Activated CD8-positive, alpha-beta T cell treated with anti-CD3 and anti-CD28 coated beads for 36 hours (primary cell): ENCODE measurements at regions of chr19 and their contacts with region 1.

Region 1: DNA sequence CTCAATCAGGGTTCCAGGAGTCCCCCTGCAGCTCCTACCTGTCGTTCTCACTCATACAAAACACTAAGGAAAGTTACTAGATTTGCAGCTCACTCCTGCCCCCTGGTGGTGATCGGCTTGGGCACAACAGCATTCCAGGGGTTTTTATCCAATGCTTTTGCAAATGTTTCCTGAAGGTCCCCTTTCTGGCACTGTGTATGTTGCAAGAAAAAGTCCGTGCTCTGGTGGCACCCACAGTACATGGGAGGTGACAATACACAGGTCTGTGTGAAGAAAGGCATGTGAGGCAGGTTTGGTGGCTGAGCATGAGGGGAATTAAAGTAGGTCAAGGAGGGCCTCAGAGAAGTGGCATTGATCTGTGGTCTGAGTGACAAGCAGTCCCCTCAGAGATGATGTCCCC is 8.6 kb upstream of the TYK2 start:
- DNase-seq: peak; percentile 89
- ATAC-seq: peak; percentile 48
- H3K4me3 Mint-ChIP-seq: no peak overlapping the region
- H3K27ac Mint-ChIP-seq: no peak overlapping the region
- H3K4me1 Mint-ChIP-seq: peaks cover 16% of the 10 kb centered on the region
- H3K27me3 Mint-ChIP-seq: no peaks in the 10 kb centered on the region
- CTCF ChIP-seq: peak; percentile 99

Region 2: DNA sequence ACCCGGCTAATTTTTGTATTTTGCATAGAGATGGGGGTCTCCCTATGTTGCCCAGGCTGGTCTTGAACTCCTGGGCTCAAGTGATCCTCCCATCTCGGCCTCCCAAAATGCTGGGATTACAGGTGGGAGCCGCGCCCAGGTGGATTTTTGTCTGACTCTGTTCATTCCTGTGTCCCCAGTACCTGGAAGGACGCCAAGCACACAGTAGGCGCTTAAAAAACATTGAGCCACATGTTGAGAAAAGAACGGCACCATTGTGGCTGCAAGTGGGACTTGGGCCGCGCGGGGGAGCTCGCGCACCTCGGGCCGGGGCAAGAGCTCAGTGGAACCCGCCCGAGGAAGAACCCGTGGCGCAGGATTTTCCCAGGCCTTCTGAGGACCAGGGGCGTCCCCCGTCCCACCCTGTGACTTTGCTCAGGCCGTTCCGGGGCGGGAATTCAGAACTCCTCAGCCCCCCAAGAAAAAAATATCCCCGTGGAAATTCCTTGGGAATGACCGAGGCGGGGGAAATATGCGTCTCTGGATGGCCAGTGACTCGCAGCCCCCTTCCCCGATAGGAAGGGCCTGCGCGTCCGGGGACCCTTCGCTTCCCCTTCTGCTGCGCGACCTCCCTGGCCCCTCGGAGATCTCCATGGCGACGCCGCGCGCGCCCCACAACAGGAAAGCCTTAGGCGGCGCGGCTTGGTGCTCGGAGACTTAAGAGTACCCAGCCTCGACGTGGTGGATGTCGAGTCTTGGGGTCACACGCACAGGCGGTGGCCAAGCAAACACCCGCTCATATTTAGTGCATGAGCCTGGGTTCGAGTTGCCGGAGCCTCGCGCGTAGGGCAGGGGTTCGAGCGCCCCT is 119.4 kb before region 1 on chr19:
- CTCF ChIA-PET with region 1: interaction called, 286 read pairs
- POLR2A ChIA-PET with region 1: interaction called, 23 read pairs
- intact Hi-C with region 1: loop called (anchors 1 kb)
- DNase-seq: peak; percentile 95
- ATAC-seq: peak; percentile 72
- H3K4me3 Mint-ChIP-seq: peak overlapping the region; percentile 85
- H3K27ac Mint-ChIP-seq: peak overlapping the region; percentile 89
- H3K4me1 Mint-ChIP-seq: peaks cover 20% of the 10 kb centered on the region
- H3K27me3 Mint-ChIP-seq: no peaks in the 10 kb centered on the region
- CTCF ChIP-seq: peak; percentile 97

Region 3: GRCh38 chr19:10292206-10292788 is 96.7 kb before region 1 on chr19:
- CTCF ChIA-PET with region 1: interaction called, 21 read pairs
- POLR2A ChIA-PET with region 1: interaction called, 8 read pairs
- intact Hi-C with region 1: no loop called
- DNase-seq: peak; percentile 87
- ATAC-seq: peak; percentile 59
- H3K4me3 Mint-ChIP-seq: peak overlapping the region; percentile 73
- H3K27ac Mint-ChIP-seq: no peak overlapping the region
- H3K4me1 Mint-ChIP-seq: peaks cover 62% of the 10 kb centered on the region
- H3K27me3 Mint-ChIP-seq: peaks cover 75% of the 10 kb centered on the region
- CTCF ChIP-seq: no peak

Region 4: GRCh38 chr19:10344780-10345179 is 44.2 kb before region 1 on chr19:
- CTCF ChIA-PET with region 1: interaction called, 14 read pairs
- POLR2A ChIA-PET with region 1: no interaction called
- intact Hi-C with region 1: loop called (anchors 10 kb)
- DNase-seq: no peak
- ATAC-seq: no peak
- H3K4me3 Mint-ChIP-seq: no peak overlapping the region
- H3K27ac Mint-ChIP-seq: no peak overlapping the region
- H3K4me1 Mint-ChIP-seq: peaks cover 9% of the 10 kb centered on the region
- H3K27me3 Mint-ChIP-seq: no peaks in the 10 kb centered on the region
- CTCF ChIP-seq: no peak

Region 5: DNA sequence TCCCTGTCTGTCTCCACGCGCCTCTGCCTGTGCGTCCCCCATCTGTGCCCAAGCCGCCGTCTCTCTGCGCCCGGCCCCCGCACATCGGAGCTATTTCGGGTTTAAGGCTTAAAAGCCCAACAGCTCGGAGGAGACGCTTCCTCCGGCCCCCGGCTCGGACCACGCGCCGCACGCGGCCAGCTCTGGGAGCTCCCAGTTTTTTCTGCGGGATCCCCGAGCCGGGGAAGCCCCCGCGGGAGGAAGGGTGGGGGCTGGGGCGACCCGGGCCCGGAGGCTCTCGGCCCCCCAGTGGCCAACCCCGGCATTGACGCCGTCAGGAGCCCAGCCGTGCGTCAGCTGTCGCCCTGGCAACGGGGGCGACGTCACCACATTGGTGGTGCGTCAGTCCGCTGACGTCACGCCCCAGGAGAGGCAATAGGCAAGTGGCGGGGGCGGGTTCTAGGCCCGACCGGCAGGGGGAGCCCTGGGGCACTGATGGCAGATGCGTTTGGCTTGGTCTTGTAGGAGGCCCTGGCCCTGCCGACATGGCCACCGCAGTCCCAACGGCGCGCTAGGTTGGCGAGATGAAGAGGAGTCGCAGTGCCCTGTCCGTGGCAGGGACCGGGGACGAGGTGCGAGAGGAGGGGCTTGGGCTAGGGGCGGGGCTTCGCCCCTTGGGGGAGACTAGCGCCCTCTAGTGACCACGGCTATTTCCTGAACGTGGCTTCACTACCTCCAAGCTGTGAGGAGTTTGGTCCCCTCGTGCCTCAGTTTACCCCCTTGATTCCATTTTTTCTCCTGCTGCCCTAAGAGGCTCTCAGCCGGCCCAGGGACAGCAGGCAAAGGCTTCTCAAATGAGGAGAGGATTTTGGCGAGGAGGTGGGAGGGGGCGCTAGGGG is 27.7 kb after region 1 on chr19:
- CTCF ChIA-PET with region 1: interaction called, 10 read pairs
- POLR2A ChIA-PET with region 1: no interaction called
- intact Hi-C with region 1: no loop called
- DNase-seq: peak; percentile 97
- ATAC-seq: peak; percentile 50
- H3K4me3 Mint-ChIP-seq: peak overlapping the region; percentile 63
- H3K27ac Mint-ChIP-seq: peak overlapping the region; percentile 84
- H3K4me1 Mint-ChIP-seq: peaks cover 59% of the 10 kb centered on the region
- H3K27me3 Mint-ChIP-seq: peaks cover 13% of the 10 kb centered on the region
- CTCF ChIP-seq: peak; percentile 100

Region 6: DNA sequence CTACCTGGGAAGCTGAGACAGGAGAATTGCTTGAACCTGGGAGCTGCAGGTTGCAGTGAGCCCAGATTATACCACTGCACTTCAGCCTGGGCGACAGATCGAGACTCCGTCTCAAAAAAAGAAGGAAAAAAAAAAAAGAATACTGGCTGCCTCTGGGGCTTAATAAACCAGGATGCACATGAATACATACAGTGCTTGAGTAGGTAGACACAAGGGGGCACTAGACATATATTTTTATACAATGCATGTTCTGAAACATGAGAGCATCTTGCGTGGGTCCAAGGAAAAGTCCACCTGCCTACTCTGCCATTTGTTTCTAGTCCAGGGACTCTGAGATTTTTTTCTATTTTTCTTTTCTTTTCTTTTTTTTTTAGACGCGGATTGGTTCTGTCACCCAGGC is 83.0 kb after region 1 on chr19:
- CTCF ChIA-PET with region 1: no interaction called
- POLR2A ChIA-PET with region 1: no interaction called
- intact Hi-C with region 1: no loop called
- DNase-seq: peak; percentile 19
- ATAC-seq: peak; percentile 63
- H3K4me3 Mint-ChIP-seq: no peak overlapping the region
- H3K27ac Mint-ChIP-seq: no peak overlapping the region
- H3K4me1 Mint-ChIP-seq: no peaks in the 10 kb centered on the region
- H3K27me3 Mint-ChIP-seq: no peaks in the 10 kb centered on the region
- CTCF ChIP-seq: peak; percentile 64

Region 7: DNA sequence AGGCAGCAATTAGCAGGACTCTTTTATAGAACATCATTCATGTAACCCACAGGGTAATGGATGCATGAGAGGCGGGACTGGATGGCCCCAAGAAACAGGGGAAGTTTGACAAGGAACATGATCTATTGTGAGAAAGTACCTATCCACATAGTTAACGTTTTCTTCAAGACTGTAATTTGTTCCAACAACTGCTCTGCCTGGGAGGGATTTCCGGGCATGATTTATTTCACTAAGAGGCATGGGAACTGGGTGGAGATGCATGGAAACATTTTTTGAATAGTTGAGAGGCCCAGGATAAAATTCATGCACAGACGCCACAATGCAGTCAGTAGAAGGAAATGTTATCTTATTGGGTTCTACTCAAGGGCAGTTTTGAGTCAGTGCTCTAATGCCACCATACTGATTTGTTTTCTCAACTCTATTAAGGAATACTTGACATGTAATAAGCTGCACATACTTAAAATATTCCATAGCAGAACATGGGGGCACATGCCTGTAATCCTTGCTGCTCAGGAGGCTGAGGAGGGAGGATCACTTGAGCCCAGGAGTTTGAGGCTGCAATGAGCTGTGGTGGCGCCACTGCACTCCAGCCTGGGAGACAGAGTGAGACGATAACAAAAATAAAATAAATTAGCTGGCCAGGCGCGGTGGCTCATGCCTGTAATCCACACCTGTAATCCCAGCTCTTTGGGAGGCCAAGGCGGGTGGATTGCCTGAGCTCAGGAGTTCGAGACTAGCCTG is 144.9 kb after region 1 on chr19:
- CTCF ChIA-PET with region 1: no interaction called
- POLR2A ChIA-PET with region 1: no interaction called
- intact Hi-C with region 1: no loop called
- DNase-seq: no peak
- ATAC-seq: no peak
- H3K4me3 Mint-ChIP-seq: no peak overlapping the region
- H3K27ac Mint-ChIP-seq: no peak overlapping the region
- H3K4me1 Mint-ChIP-seq: no peaks in the 10 kb centered on the region
- H3K27me3 Mint-ChIP-seq: peaks cover 6% of the 10 kb centered on the region
- CTCF ChIP-seq: no peak